ENCODE measurements at regions of chr9 and their contacts with region 1.

Region 1: DNA sequence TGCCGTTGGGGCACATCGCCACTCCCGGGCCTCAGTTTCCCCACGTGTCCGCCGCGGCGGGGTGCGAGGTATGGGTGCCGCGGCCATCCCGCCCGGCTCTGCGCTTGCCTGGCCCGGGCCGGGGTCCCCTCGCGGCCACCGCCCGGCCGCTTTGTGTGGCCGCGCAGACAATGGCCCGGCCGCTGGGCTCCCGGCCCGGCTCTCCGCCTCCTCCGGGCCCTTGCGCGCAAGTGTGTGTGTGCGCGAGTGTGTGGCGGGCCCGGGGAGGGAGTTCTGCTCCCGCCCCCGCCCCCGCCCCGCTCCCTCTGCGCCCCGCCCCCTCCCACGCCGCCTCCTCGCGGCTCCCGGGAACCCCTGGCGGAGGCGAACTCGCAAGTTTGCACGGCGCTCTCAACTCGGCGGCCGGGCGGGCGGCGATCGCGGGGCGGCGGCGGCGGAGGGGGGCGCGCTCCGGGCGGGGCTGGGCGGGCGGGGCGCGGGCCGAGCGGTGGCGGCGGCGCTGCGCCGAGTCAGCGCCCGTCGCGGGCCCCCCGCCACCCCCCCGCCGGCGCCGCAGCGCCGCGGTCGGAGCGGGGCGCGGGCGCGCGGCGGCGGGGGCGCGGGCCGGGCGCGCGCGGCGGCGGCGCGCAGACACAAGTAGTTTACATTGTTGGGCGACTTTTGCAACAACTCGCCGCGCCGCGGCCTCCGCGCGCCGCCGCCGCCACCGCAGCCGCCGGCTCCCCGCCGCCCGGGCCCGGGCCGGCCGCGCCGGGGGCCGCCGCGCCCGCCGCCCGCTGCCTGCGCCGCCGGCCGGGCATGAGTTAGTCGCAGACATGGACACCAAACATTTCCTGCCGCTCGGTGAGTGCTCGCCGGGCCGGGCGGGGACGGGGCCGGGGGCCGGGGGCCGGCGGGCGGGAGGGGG is at the start of gene RXRA:
- H3K4me3 Mint-ChIP-seq: peak within 1 kb of the TSS; percentile 89
- H3K27ac Mint-ChIP-seq: peak within 1 kb of the TSS; percentile 77
- H3K4me1 Mint-ChIP-seq: peaks cover 17% of the 10 kb centered on the region
- H3K27me3 Mint-ChIP-seq: peaks cover 21% of the 10 kb centered on the region

Region 2: DNA sequence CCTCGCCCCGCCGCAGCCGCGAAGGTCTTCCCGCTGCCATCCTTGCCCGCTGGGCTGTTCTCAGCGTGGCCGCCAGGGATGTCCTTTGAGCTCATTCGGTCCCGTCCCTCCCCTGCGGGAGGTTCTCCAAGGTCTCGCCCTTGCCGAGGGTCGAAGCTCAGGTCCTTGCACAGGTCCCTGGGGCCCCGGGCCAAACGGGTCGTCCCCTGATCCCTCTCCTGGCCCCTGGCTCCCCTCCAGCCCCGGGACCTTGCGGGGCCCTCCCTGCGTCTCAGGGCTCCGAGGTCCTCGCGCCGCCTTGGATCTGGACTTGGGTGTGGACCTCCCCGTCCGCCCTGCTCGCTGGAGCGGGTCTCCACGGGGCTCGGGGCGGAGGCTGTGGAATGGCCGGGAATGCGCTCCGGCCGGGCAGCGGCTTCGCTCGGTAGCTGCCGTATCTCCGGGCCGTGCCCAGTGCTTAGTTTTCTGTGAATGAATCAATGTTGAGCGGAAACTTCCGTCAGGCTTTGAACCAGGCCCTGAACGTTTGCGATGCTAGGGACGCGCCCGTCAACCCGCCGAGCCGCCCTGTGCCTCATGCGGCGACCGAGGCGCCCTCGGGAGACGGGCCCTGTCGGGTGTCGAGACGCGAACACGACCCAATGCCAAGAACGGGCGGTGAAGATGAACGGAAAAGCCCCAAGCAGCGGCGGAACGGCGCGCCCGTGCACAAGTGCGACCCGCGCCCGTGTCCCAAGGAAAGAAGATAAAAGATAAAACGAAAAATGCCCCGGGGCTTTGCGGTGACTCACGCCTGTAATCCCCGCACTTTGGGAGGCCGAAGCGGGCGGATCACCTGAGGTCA is 162.5 kb before region 1 on chr9:
- intact Hi-C with region 1: loop called (anchors 5 kb)
- H3K4me3 Mint-ChIP-seq: no peak overlapping the region
- H3K27ac Mint-ChIP-seq: no peak overlapping the region
- H3K4me1 Mint-ChIP-seq: peaks cover 38% of the 10 kb centered on the region
- H3K27me3 Mint-ChIP-seq: peaks cover 5% of the 10 kb centered on the region

Region 3: DNA sequence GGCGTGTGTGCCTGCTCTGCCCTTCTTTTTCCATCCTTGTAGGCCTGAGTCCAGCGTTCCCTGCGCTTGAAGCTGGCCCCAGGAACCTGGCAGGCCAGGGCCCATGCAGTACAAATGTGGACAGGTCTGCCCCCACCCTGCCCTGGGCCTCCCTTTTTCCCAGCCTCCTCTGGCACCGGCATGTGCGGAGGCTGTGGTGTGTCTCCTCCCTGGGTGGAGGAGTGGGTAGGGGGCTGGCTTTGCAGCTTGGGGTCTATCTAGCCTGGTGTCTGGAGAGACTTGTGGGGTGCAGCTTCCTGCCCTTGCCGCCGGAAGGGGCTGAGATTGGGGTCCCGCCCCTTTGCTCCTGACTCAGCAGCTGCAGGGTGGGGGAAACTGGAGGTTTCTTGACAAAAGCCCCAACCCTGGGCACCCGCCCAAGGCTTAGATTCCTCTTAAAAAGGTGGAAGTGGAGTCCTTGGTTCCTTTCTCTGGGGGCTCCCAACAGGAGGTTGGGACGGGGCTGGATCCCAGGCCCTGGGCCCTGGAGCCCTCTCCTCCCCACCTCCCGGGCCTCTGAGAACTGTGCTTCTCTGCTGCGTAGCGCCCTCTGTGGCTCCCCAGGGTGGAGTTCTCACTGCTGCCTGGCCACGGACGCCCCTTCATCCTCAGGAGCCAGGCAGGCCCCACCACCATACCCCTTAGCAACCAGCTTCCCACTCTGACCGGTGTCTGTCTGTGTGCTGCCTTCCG is 18.2 kb after region 1 on chr9:
- intact Hi-C with region 1: loop called (anchors 2 kb)
- H3K4me3 Mint-ChIP-seq: peak overlapping the region; percentile 62
- H3K27ac Mint-ChIP-seq: no peak overlapping the region
- H3K4me1 Mint-ChIP-seq: no peaks in the 10 kb centered on the region
- H3K27me3 Mint-ChIP-seq: no peaks in the 10 kb centered on the region

Region 4: DNA sequence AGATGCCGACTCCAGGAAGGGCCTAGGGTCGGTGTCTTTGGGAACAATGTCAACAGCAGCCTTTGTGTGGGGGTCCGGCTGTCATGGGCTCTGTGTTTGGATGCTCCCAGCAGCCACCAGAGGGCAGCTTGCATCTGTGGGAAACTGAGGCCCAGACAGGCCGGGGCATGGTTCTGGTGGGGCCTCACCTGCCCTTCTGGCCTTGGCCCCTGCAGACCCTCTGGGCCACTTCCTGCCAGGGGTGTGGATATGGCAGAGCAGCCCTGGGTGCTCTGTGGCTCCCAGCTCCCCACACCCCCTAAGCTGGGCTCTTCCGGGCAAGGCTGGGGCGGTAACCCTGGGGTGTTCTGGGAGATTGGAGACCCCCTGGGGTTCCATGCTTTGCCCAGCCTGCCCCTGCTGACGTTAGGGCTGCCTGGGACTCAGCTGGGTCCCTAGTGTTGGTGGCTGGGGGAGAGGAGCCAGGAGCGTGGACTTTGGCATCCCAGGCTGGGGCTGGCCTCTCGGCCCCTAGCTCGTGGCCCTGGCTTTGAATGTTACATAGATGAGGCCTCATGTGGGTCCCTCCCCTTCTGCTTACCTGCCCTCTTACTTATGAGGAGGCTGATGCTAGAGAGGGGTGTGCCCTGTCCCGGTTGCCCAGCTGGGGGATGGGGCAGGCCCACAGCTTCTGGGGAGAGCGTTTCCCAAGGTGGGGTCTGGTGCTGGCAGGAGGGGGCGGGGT is 38.5 kb after region 1 on chr9:
- intact Hi-C with region 1: loop called (anchors 5 kb)
- H3K4me3 Mint-ChIP-seq: peak overlapping the region; percentile 14
- H3K27ac Mint-ChIP-seq: peak overlapping the region; percentile 91
- H3K4me1 Mint-ChIP-seq: peaks cover 96% of the 10 kb centered on the region
- H3K27me3 Mint-ChIP-seq: no peaks in the 10 kb centered on the region

Region 5: GRCh38 chr9:134624827-134625181 is 298.7 kb after region 1 on chr9:
- intact Hi-C with region 1: no loop called
- H3K4me3 Mint-ChIP-seq: no peak overlapping the region
- H3K27ac Mint-ChIP-seq: no peak overlapping the region
- H3K4me1 Mint-ChIP-seq: no peaks in the 10 kb centered on the region
- H3K27me3 Mint-ChIP-seq: peaks cover 10% of the 10 kb centered on the region

Measured in dendritic cell treated with granulocyte-macrophage colony-stimulating factor and Interleukin-4, amounts not matched to agents 40 ng/mL and 50 ng/mL, for 4 days (primary cell).